Posterior cingulate gyrus (tissue), 11 donors: ENCODE measurements at regions of chr12 and their contacts with region 1.

Region 1: GRCh38 chr12:55659486-55660385 is 23.0 kb downstream of the OR10P1 start:
- DNase-seq: no peak

Region 2: DNA sequence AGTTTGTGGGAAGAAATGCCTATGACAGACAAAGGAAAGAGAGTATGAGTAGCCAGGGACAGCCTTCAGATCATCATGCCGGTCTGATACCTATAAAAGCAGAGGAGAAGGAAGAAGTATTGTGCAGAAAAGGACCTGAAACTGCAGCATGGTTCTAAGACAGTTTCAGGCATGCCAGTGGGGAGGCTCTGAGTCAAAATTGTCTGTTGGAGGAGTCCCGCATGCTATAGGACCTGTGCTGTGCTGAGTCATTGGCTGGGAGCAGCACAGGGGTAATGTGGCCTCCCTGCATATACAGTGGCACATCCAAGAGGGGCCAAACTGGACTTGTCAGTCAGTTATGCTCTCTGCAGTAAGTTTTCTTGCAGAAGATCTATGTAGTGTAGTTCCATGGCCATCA is 599.3 kb before region 1 on chr12:
- intact Hi-C with region 1: no loop called
- DNase-seq: no peak

Region 3: DNA sequence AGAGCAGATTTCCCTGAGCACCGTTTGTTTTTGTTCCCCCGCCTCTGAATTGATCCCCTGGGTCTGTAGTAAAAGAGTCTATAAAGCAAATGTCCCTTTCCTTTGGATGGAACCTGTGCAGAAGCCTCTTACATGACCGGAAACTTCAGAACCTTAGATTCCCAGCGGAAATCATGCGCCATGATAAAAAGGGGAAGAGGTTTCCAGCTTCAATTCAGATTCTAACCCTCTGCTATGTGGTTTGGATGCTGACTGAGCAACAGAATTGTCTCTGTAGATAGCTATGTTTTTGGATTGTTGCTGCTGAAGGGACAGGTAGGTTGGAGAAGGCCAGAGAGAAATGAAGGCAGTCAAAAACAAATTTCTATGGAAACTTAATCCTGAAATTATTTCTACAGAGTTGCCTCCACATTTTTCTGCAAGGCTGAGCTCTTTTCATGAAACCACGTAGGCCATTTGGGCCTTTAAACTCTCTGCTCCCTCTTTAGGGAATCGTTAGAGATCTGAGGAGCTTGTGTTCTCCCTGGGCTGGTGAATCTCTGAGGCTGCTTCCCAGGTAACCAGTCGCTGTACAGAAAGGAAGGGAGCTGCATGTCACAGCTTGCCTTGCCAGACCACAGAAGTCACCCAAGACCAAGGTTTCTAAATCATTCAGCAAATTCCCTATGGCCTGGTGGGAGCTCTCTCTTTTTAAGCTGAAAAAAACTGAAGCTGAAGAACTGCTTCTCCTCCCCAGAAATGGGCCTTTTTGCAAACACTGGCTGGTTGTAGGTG is 51.7 kb before region 1 on chr12:
- intact Hi-C with region 1: no loop called
- DNase-seq: no peak

Region 4: DNA sequence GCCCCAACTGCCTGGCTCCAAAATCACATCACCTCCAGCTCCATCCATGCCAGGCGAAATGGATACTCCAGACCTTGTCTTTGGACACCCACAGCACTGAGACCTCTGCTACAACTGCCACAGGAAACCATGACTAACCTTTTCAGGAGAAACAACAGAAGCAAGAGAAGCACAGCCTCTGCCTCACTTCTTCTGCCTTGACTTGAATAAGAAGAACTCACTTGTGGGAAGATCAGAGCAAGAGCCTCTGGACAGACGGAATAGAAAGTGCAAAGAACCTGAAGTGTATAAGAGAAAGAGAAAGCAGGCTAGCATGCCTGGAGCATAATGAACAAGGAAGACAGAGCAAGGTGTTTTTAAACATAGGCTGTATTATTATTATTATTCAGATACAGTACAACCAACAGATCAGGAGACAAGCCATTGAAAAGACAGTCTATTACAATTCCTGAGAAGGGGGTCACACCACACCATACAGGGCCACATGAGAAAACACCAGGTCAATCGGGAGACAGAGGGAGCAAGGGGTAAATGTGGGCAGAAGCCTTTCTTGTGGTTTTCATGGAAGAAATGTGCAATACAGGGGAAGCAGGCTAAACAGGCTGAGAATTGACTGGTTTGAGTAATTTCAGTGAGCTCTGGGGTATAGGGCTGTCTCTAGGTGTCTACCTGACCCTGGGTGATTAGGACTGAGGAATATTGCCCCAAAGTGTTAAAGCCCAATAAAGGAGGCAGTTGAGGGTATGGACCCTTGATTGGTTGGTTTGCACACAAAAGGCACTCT is 30.5 kb before region 1 on chr12:
- intact Hi-C with region 1: no loop called
- DNase-seq: no peak

Region 5: DNA sequence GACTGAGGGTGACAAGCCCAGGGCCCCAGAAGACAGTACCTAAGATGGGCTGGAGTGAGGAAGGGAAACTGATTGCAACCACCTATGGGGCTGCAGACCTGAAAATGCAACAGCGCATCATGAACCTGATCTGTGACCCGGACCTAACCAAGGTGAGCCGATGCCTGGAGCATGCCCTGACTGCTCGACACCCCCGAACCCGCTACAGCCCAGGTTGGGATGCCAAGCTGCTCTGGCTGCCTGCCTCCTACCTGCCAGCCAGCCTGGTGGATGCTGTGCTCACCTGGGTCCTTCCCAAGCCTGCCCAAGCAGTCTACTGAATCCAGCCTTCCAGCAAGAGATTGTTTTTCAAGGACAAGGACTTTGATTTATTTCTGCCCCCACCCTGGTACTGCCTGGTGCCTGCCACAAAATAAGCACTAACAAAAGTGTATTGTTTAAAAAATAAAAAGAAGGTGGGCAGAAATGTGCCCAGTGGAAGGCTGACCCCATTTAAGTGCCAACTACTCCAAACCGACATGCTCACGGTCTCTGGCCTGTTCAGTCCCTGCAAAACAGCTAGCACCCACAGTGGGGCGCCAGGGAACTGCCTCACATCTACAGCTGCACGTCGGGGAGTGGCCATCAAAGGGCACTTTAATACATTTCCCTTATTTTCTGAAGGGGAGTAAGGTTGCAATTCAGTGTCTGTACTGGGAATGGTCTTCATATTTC is 64.6 kb after region 1 on chr12:
- intact Hi-C with region 1: loop called (anchors 5 kb)
- DNase-seq: peak in 9 of 10 donors; percentile 61 to 96 (median 72)